Common myeloid progenitor, CD34-positive (primary cell): ENCODE measurements at regions of chr1 and their contacts with region 1.

Region 1: DNA sequence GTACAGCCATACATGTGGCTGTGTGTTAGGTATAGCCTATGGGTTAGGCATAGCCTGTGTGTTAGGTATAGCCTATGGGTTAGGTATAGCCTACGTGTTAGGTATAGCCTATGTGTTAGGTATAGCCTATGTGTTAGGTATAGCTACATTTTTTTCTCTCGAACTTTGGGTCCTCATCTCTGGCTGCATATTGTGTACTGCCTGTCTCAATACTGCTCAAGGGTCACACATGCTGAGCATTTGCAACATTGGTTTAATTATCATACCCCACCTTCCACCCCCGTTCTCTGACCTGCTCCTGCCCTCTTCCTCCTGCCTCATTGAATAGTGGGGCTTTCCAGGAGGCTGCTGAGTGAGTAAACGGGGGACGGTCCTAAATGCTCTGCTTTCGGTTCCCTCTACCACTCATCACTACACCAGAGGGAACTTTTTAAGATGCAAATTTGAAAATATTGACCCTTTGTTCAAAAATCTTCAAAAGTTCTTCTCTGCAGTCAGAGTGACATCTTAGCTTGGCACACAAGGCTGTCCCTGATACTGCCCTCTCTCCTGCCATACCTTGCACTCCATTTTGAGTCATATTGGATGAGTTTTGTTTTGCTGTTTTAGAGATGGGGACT is 17.8 kb downstream of the OR2B11 start:
- DNase-seq: peak in 1 of 3 donors; percentile 14
- H3K4me3 ChIP-seq: no peak overlapping the region
- H3K27ac ChIP-seq: no peak overlapping the region
- H3K4me1 ChIP-seq: peaks cover 0 to 6% (median 0%) of the 10 kb centered on the region in 4 experiments
- H3K27me3 ChIP-seq: no peaks in the 10 kb centered on the region

Region 2: GRCh38 chr1:247401310-247402119 is 38.6 kb before region 1 on chr1:
- CTCF ChIA-PET with region 1: no interaction called
- POLR2A ChIA-PET with region 1: no interaction called
- DNase-seq: no peak
- H3K4me3 ChIP-seq: no peak overlapping the region
- H3K27ac ChIP-seq: no peak overlapping the region
- H3K4me1 ChIP-seq: peaks cover 0 to 7% (median 5%) of the 10 kb centered on the region in 4 experiments
- H3K27me3 ChIP-seq: no peaks in the 10 kb centered on the region

Region 3: GRCh38 chr1:247415423-247416361 is 24.4 kb before region 1 on chr1 and contains the start of gene NLRP3:
- CTCF ChIA-PET with region 1: interaction called, 16 read pairs
- POLR2A ChIA-PET with region 1: interaction called, 4 read pairs
- DNase-seq: peak; percentile 85 to 93 (median 90)
- H3K4me3 ChIP-seq: peak within 1 kb of the TSS; percentile 55 to 92 (median 78)
- H3K27ac ChIP-seq: peak within 1 kb of the TSS; percentile 71 to 73
- H3K4me1 ChIP-seq: peaks cover 25 to 62% (median 56%) of the 10 kb centered on the region in 4 experiments
- H3K27me3 ChIP-seq: no peaks in the 10 kb centered on the region

Region 4: DNA sequence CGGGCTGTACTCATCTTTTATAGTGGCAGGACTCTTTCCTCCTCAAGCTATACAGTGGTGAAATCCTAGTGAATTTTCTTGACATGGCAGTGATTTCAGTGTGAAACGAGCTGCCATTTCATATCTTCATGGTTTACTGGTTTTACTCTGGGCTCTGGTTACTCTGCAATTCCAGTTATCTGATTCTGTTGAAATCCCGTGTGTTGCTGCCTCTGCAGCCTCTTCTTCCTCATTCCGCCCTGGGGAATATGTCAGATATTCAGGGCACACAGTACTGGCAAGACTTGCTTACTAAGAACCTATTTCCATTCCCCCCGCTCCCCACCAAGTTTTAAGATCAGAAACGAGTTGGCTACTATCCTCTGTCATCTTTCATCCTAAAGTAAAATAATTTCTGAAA is 25.7 kb after region 1 on chr1:
- CTCF ChIA-PET with region 1: no interaction called
- POLR2A ChIA-PET with region 1: no interaction called
- DNase-seq: no peak
- H3K4me3 ChIP-seq: no peak overlapping the region
- H3K27ac ChIP-seq: no peak overlapping the region
- H3K4me1 ChIP-seq: no peaks in the 10 kb centered on the region
- H3K27me3 ChIP-seq: no peaks in the 10 kb centered on the region

Region 5: DNA sequence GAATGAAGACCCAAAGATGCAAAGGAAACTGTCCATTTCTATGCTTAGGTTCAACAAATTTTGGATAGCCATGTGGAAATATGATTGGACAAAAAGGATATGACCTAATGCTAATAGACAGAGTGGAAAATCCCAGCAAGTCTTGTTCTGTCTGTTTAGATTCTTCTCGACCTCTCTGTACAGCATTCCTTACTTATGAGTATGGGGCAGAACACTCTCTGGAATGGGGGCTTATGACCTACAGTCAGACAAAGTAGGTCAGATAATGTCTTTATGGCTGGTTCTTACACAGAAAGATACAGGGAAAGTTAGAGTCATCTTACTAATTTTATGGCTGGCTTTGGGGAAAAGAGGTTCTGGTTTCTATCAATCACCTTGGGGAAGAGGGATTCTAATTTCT is 111.6 kb after region 1 on chr1:
- CTCF ChIA-PET with region 1: no interaction called
- POLR2A ChIA-PET with region 1: interaction called, 10 read pairs
- DNase-seq: no peak
- H3K4me3 ChIP-seq: peak overlapping the region in 2 of 7 experiments; percentile 50 to 54
- H3K27ac ChIP-seq: no peak overlapping the region
- H3K4me1 ChIP-seq: peaks cover 34 to 62% (median 48%) of the 10 kb centered on the region in 4 experiments
- H3K27me3 ChIP-seq: no peaks in the 10 kb centered on the region